Activated T-helper 2 cell treated with anti-CD3 and anti-CD28 coated beads, Interferon-gamma antibody, Interleukin-2, Interleukin-4, amounts not matched to agents 10 μg/mL and 5 μg/mL and 100 μg/mL, durations not matched to agents 14 hours and 24 hours and 36 hours (primary cell): ENCODE measurements at regions of chr1 and their contacts with region 1.

Region 1: GRCh38 chr1:230208619-230209261 is 141.7 kb downstream of the GALNT2 start:
- DNase-seq: no peak
- H3K4me3 Mint-ChIP-seq: peak overlapping the region; percentile 76
- H3K27ac Mint-ChIP-seq: peak overlapping the region; percentile 99
- H3K4me1 Mint-ChIP-seq: peaks cover 72% of the 10 kb centered on the region
- H3K27me3 Mint-ChIP-seq: no peaks in the 10 kb centered on the region

Region 2: DNA sequence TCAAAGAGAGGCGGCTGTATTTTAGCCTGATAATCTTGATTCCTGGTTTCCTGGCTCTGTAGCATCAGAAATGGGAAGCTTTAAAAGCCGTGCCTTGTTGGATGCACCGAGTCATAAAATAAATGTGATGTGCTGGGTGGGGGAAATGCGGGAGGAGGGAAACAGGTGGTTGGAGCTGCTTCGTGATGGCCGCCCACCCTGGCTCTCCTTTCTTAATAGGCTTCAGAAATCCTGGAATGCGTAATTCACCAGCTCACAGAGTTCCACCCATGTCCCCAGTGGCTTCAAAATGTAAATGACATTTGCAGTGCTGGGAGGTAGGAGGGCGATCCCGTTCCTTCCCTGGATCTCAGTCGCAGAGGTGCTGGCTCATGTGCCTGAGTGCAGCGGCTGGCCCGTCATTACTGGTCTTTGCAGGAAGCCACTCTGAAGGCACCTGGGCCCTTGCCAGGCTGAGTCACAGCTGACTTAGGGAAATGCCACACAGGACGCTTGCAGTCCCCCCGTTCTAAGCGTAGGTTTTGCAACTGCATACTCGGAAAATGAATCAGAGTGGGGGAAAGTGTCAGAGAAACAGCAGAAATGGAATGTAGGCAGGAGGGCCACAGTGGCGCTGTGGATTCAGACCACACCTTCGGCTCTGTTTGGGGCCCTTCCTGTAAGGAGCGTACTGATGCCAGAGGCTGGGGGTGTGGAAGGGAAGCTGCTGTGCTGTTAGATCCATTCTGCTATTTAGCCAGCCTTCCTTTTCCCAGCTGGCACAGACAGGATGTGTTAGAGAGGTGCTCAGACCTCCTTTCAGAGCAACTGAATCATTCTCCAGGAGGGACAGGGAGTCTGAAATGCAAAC is 104.1 kb before region 1 on chr1:
- intact Hi-C with region 1: loop called (anchors 1 kb)
- DNase-seq: peak; percentile 29
- H3K4me3 Mint-ChIP-seq: peak overlapping the region; percentile 38
- H3K27ac Mint-ChIP-seq: peak overlapping the region; percentile 83
- H3K4me1 Mint-ChIP-seq: peaks cover 85% of the 10 kb centered on the region
- H3K27me3 Mint-ChIP-seq: no peaks in the 10 kb centered on the region

Region 3: GRCh38 chr1:230127105-230128054 is 81.4 kb before region 1 on chr1:
- intact Hi-C with region 1: loop called (anchors 2 kb)
- DNase-seq: peak; percentile 47
- H3K4me3 Mint-ChIP-seq: peak overlapping the region; percentile 53
- H3K27ac Mint-ChIP-seq: peak overlapping the region; percentile 70
- H3K4me1 Mint-ChIP-seq: peaks cover 62% of the 10 kb centered on the region
- H3K27me3 Mint-ChIP-seq: no peaks in the 10 kb centered on the region

Region 4: GRCh38 chr1:230240446-230241086 is 31.8 kb after region 1 on chr1:
- intact Hi-C with region 1: loop called (anchors 1 kb)
- DNase-seq: no peak
- H3K4me3 Mint-ChIP-seq: no peak overlapping the region
- H3K27ac Mint-ChIP-seq: peak overlapping the region; percentile 85
- H3K4me1 Mint-ChIP-seq: peaks cover 35% of the 10 kb centered on the region
- H3K27me3 Mint-ChIP-seq: no peaks in the 10 kb centered on the region

Region 5: GRCh38 chr1:230270559-230271281 is 62.0 kb after region 1 on chr1:
- intact Hi-C with region 1: loop called (anchors 2 kb)
- DNase-seq: peak; percentile 19
- H3K4me3 Mint-ChIP-seq: no peak overlapping the region
- H3K27ac Mint-ChIP-seq: peak overlapping the region; percentile 91
- H3K4me1 Mint-ChIP-seq: peaks cover 31% of the 10 kb centered on the region
- H3K27me3 Mint-ChIP-seq: no peaks in the 10 kb centered on the region